ENCODE measurements at regions of chr11 and their contacts with region 1.

Region 1: GRCh38 chr11:65382033-65382807 is at the start of gene SLC25A45:
- DNase-seq: peak; percentile 97
- ATAC-seq: peak; percentile 84
- H3K4me3 Mint-ChIP-seq: peak within 1 kb of the TSS; percentile 78
- H3K27ac Mint-ChIP-seq: peak within 1 kb of the TSS; percentile 97
- H3K4me1 Mint-ChIP-seq: peaks cover 37% of the 10 kb centered on the region
- H3K27me3 Mint-ChIP-seq: no peaks in the 10 kb centered on the region
- total RNA-seq, gene SLC25A45: 13.2 to 14.3 TPM

Region 2: GRCh38 chr11:65366340-65366773 is 15.9 kb before region 1 on chr11:
- CTCF ChIA-PET with region 1: interaction called, 3 read pairs
- POLR2A ChIA-PET with region 1: no interaction called
- intact Hi-C with region 1: loop called in 1 of 2 experiments (anchors 2 kb)
- DNase-seq: peak; percentile 48
- ATAC-seq: peak; percentile 72
- H3K4me3 Mint-ChIP-seq: no peak overlapping the region
- H3K27ac Mint-ChIP-seq: no peak overlapping the region
- H3K4me1 Mint-ChIP-seq: peaks cover 10% of the 10 kb centered on the region
- H3K27me3 Mint-ChIP-seq: no peaks in the 10 kb centered on the region

Region 3: DNA sequence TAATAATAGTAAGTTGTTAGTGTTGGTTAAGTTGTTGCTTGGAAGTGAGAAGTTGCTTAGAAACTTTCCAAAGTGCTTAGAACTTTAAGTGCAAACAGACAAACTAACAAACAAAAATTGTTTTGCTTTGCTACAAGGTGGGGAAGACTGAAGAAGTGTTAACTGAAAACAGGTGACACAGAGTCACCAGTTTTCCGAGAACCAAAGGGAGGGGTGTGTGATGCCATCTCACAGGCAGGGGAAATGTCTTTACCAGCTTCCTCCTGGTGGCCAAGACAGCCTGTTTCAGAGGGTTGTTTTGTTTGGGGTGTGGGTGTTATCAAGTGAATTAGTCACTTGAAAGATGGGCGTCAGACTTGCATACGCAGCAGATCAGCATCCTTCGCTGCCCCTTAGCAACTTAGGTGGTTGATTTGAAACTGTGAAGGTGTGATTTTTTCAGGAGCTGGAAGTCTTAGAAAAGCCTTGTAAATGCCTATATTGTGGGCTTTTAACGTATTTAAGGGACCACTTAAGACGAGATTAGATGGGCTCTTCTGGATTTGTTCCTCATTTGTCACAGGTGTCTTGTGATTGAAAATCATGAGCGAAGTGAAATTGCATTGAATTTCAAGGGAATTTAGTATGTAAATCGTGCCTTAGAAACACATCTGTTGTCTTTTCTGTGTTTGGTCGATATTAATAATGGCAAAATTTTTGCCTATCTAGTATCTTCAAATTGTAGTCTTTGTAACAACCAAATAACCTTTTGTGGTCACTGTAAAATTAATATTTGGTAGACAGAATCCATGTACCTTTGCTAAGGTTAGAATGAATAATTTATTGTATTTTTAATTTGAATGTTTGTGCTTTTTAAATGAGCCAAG is 43.1 kb after region 1 on chr11:
- CTCF ChIA-PET with region 1: interaction called, 4 read pairs
- POLR2A ChIA-PET with region 1: interaction called, 25 read pairs
- intact Hi-C with region 1: loop called in 1 of 2 experiments (anchors 1 kb)
- DNase-seq: peak; percentile 87
- ATAC-seq: peak; percentile 18
- H3K4me3 Mint-ChIP-seq: peak overlapping the region; percentile 100
- H3K27ac Mint-ChIP-seq: peak overlapping the region; percentile 99
- H3K4me1 Mint-ChIP-seq: peaks cover 51% of the 10 kb centered on the region
- H3K27me3 Mint-ChIP-seq: peaks cover 6% of the 10 kb centered on the region

Region 4: DNA sequence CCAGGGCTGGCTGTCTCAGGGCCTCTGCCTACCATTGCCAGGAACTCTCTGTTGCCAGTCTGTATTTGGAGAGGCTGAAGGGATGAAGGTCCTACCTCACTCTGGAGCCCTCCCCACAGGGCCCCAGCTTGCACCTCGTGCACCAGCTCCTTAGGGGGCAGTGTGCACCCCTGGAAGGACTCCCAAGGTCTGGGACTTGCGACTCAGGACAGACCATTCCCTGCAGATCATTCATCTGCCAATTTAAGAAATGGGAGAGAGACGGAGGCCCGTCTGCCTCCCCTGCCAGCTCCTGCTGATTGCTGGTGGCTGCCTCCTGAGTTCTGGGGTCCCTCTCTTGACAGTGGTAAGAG is 89.2 kb after region 1 on chr11:
- CTCF ChIA-PET with region 1: interaction called, 5 read pairs
- POLR2A ChIA-PET with region 1: interaction called, 12 read pairs
- intact Hi-C with region 1: loop called (anchors 1 kb)
- DNase-seq: peak; percentile 47
- ATAC-seq: no peak
- H3K4me3 Mint-ChIP-seq: peak overlapping the region; percentile 62
- H3K27ac Mint-ChIP-seq: peak overlapping the region; percentile 92
- H3K4me1 Mint-ChIP-seq: peaks cover 46% of the 10 kb centered on the region
- H3K27me3 Mint-ChIP-seq: no peaks in the 10 kb centered on the region

Region 5: GRCh38 chr11:65497141-65498041 is 115.2 kb after region 1 on chr11:
- CTCF ChIA-PET with region 1: interaction called, 3 read pairs
- POLR2A ChIA-PET with region 1: interaction called, 13 read pairs
- intact Hi-C with region 1: loop called (anchors 1 to 2 kb)
- DNase-seq: peak; percentile 100
- ATAC-seq: peak; percentile 70
- H3K4me3 Mint-ChIP-seq: no peak overlapping the region
- H3K27ac Mint-ChIP-seq: peak overlapping the region; percentile 96
- H3K4me1 Mint-ChIP-seq: peaks cover 41% of the 10 kb centered on the region
- H3K27me3 Mint-ChIP-seq: no peaks in the 10 kb centered on the region

Region 6: GRCh38 chr11:65540297-65541092 is 158.3 kb after region 1 on chr11:
- CTCF ChIA-PET with region 1: interaction called, 3 read pairs
- POLR2A ChIA-PET with region 1: interaction called, 3 read pairs
- intact Hi-C with region 1: loop called in 1 of 2 experiments (anchors 1 kb)
- DNase-seq: peak; percentile 93
- ATAC-seq: peak; percentile 89
- H3K4me3 Mint-ChIP-seq: peak overlapping the region; percentile 72
- H3K27ac Mint-ChIP-seq: peak overlapping the region; percentile 81
- H3K4me1 Mint-ChIP-seq: peaks cover 15% of the 10 kb centered on the region
- H3K27me3 Mint-ChIP-seq: no peaks in the 10 kb centered on the region